GM13976 (cell line): ENCODE measurements at regions of chr4 and their contacts with region 1.

Region 1: GRCh38 chr4:164977243-164978164 is at the start of gene TRIM61:
- DNase-seq: peak; percentile 83
- CTCF ChIP-seq: peak; percentile 10

Region 2: DNA sequence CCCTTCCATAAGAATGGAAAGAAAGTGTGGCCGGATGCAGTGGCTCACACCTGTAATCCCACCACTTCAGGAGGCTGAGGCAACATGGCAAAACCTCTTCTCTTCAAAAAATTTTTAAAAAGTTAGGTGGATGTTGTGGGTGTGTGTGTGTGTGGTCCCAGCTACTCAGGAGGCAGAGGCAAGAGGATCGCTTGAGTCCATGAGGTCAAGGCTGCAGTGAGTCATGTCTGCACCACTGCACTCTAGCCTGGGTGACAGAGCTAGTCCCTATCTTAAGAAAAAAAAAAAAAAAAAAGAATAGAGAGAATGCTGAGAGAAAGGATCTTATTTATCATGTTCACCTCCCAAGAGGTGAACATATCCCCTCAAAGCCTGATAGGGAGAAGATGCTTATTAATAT is 715.7 kb before region 1 on chr4:
- in situ Hi-C with region 1: no loop called
- DNase-seq: no peak
- CTCF ChIP-seq: no peak

Region 3: DNA sequence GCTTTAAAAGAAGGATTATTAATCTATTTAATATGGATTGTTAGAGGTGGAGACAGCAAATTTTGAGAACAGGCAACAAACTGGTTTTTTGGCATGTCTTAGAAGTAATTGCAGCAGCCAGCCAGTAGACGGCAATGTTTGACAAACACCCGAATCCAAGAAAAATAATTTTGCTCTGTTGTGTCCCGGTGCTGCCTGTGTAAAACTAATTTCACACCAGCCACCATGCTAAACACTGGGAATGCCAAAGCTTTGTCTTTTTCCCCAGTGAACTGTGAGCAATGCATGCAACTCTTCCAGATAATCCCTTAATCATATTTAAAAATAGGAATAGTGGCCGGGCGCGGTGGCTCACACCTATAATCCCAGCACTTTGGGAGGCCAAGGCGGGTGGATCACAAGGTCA is 197.7 kb before region 1 on chr4:
- in situ Hi-C with region 1: loop called (anchors 25 kb)
- DNase-seq: peak; percentile 55
- CTCF ChIP-seq: peak; percentile 80

Region 4: GRCh38 chr4:165152527-165152926 is 175.0 kb after region 1 on chr4:
- in situ Hi-C with region 1: no loop called
- DNase-seq: no peak
- CTCF ChIP-seq: no peak